ENCODE measurements at regions of chr2 and their contacts with region 1.

Region 1: DNA sequence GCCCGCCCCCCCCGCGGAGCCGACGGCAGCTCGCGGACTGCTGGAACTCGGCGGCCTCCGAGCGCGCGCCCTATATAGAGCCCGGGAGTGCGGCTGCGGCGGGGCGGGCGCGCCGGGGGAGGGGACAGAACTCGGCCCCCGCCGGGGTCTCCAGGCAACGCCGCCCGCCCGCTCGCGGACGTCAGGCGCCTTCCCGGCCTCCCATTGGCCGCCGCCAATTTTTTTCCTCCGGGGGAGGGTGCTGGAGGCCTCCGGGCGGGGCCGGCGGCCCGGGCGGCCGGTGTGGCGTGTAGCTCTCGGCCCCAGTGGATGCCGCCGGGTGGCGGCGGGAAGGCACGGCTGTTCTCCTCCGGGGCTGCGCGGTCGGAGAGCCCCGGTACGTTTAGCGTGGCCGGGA is at the start of gene ZFP36L2:
- DNase-seq: peak; percentile 83
- H3K4me3 ChIP-seq: peak within 1 kb of the TSS; percentile 87
- H3K27ac ChIP-seq: peak within 1 kb of the TSS; percentile 95
- H3K27me3 ChIP-seq: no peaks in the 10 kb centered on the region
- CTCF ChIP-seq: no peak
- polyA plus RNA-seq, gene ZFP36L2: 16.0 and 18.2 TPM in 2 replicates

Region 2: GRCh38 chr2:42844901-42845821 is 381.4 kb before region 1 on chr2:
- CTCF ChIA-PET with region 1: interaction called, 3 read pairs
- POLR2A ChIA-PET with region 1: interaction called, 21 read pairs
- DNase-seq: peak; percentile 82
- H3K4me3 ChIP-seq: no peak overlapping the region
- H3K27ac ChIP-seq: peak overlapping the region; percentile 52
- H3K27me3 ChIP-seq: peaks cover 2% of the 10 kb centered on the region
- CTCF ChIP-seq: no peak

Region 3: DNA sequence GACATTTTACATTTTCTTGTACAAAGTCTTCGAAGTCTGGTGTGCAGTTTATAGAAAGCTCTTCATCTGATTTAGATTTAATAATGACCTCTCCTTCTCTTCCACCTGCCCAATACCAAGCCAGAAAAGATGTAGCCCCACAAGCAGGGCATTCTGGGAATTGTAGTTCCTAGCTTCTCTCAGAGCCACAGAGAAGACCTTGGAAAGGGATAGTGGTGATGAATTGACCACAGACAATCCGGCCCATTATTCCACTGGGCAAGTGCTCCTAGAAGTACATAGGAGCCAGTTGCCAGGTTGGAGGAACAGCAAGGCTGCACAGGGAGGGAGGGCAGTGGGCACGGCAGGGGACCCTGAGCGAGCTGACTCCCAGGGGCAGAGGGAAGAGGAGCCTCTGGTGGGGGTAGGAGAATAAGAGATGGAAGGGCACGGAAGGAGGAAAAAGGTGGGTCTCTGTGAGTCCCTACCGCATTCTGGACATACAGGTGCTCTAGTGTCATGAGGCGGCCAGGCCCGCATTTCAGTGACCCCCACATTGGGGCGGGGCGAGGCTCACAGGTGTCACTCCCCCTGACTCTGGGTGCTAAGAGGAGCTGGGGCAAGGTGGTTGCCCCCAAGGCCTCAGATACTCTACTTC is 281.7 kb before region 1 on chr2:
- CTCF ChIA-PET with region 1: interaction called, 89 read pairs
- POLR2A ChIA-PET with region 1: interaction called, 11 read pairs
- DNase-seq: no peak
- H3K4me3 ChIP-seq: no peak overlapping the region
- H3K27ac ChIP-seq: no peak overlapping the region
- H3K27me3 ChIP-seq: no peaks in the 10 kb centered on the region
- CTCF ChIP-seq: no peak

Region 4: DNA sequence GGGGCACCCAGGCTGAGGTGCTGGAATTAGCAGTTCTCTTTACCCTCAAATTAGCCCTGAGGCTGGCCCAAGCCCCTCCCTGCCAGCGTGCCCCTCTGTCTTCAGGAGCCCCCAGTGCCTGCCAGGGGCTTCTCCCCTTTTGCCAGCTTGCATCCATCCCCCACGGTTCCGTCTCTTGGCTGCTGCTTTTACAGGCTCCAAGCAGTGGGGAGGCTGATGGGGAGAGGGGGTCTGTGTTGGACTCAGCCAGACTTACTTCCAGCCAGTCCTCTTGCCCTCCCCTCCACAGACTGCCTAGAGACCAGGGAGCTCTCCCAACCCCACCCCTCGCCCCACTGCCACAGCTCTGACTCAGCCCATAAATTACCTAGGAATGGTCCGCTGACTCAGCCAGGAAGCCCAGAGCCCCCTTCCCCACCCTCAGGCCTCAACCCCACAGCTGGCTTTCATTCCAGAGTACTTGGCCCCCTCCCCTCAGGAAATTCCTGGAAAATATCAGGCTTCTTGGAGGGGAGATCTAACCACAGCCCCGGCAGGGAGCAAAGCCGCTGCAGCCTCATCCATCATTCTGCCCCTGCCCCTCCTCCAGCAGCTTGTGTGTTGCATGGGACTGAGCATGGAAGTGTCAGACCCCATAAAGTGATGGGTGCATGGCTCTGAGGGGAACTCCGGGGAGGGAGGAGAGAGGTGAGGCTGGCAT is 184.7 kb before region 1 on chr2:
- CTCF ChIA-PET with region 1: no interaction called
- POLR2A ChIA-PET with region 1: interaction called, 13 read pairs
- DNase-seq: peak; percentile 93
- H3K4me3 ChIP-seq: no peak overlapping the region
- H3K27ac ChIP-seq: peak overlapping the region; percentile 70
- H3K27me3 ChIP-seq: no peaks in the 10 kb centered on the region
- CTCF ChIP-seq: no peak

Region 5: DNA sequence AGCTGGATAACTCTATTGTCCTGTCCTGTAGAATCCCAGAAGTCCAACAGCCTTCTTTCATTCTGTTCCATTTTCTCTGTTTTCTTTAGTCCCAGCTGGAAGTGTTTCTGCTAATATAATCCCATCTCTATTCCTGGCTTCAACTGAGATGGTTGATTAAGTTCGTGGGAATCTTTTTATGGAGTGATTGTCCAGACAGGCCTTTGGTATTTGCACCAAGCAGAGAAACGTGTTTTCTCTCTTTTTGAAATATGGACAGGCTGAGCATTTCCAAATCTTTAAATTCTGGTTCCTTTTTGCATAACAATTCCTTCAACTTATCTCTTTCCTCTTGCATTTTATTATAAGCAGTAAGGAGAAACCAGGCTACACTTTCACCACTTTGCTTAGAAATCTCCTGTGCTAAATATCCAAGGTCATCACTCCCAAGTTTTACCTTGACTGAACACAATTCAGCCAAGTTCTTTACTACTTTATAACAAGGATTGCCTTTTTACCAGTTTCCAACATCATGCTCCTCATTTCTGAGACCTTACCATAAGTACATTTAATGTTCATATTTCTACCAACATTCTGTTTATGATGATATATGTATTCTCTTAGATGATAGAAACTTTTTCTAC is 108.9 kb before region 1 on chr2:
- CTCF ChIA-PET with region 1: no interaction called
- POLR2A ChIA-PET with region 1: no interaction called
- DNase-seq: no peak
- H3K4me3 ChIP-seq: no peak overlapping the region
- H3K27ac ChIP-seq: no peak overlapping the region
- H3K27me3 ChIP-seq: no peaks in the 10 kb centered on the region
- CTCF ChIP-seq: no peak

Region 6: GRCh38 chr2:43389581-43390466 is 163.3 kb after region 1 on chr2:
- CTCF ChIA-PET with region 1: interaction called, 11 read pairs
- POLR2A ChIA-PET with region 1: no interaction called
- DNase-seq: no peak
- H3K4me3 ChIP-seq: no peak overlapping the region
- H3K27ac ChIP-seq: no peak overlapping the region
- H3K27me3 ChIP-seq: no peaks in the 10 kb centered on the region
- CTCF ChIP-seq: no peak

Region 7: DNA sequence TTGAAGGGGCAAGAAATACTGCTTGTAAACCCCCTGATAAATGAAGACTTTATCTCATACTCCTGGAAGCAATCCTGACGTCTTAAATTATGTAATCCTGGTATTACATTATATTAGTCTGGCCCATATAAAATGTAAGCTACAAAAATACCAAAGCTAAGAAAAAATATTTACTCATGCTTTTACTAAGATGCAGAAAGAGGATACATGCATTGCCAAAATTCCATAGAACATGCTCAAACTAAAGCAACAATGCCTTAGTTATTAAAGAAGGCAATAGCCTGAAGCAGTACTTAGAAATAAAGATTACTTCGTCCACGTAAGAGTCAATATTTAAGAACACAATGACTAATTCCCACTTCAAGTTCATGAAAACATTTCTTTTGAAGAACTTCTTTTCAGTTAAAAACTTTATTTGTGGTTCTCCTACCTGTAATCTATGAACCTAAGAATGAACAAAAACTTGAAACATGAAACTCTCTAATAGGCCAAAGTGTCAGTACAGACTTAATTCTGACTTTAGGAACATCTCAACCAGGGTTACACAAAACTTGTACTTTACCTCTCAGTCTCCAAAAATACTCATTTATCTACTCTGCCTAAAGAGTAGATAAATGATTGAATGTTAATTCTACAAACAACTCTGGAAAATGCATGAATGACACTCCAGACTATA is 252.0 kb after region 1 on chr2:
- CTCF ChIA-PET with region 1: interaction called, 104 read pairs
- POLR2A ChIA-PET with region 1: no interaction called
- DNase-seq: no peak
- H3K4me3 ChIP-seq: no peak overlapping the region
- H3K27ac ChIP-seq: no peak overlapping the region
- H3K27me3 ChIP-seq: no peaks in the 10 kb centered on the region
- CTCF ChIP-seq: no peak

Region 8: GRCh38 chr2:43542285-43542937 is 315.9 kb after region 1 on chr2:
- CTCF ChIA-PET with region 1: interaction called, 22 read pairs
- POLR2A ChIA-PET with region 1: interaction called, 5 read pairs
- DNase-seq: no peak
- H3K4me3 ChIP-seq: no peak overlapping the region
- H3K27ac ChIP-seq: no peak overlapping the region
- H3K27me3 ChIP-seq: no peaks in the 10 kb centered on the region
- CTCF ChIP-seq: peak; percentile 50